AG04449 (cell line): ENCODE measurements at regions of chr1 and their contacts with region 1.

Region 1: GRCh38 chr1:205711104-205712020 is 31.1 kb upstream of the SLC45A3 start:
- DNase-seq: peak; percentile 31
- H3K4me3 ChIP-seq: no peak overlapping the region
- CTCF ChIP-seq: peak; percentile 77

Region 2: GRCh38 chr1:205668951-205669340 is 42.4 kb before region 1 on chr1:
- CTCF ChIA-PET with region 1: interaction called, 461 read pairs
- POLR2A ChIA-PET with region 1: no interaction called
- DNase-seq: no peak
- H3K4me3 ChIP-seq: no peak overlapping the region
- CTCF ChIP-seq: no peak

Region 3: GRCh38 chr1:205689479-205689878 is 21.9 kb before region 1 on chr1:
- CTCF ChIA-PET with region 1: interaction called, 141 read pairs
- POLR2A ChIA-PET with region 1: no interaction called
- DNase-seq: no peak
- H3K4me3 ChIP-seq: no peak overlapping the region
- CTCF ChIP-seq: no peak

Region 4: DNA sequence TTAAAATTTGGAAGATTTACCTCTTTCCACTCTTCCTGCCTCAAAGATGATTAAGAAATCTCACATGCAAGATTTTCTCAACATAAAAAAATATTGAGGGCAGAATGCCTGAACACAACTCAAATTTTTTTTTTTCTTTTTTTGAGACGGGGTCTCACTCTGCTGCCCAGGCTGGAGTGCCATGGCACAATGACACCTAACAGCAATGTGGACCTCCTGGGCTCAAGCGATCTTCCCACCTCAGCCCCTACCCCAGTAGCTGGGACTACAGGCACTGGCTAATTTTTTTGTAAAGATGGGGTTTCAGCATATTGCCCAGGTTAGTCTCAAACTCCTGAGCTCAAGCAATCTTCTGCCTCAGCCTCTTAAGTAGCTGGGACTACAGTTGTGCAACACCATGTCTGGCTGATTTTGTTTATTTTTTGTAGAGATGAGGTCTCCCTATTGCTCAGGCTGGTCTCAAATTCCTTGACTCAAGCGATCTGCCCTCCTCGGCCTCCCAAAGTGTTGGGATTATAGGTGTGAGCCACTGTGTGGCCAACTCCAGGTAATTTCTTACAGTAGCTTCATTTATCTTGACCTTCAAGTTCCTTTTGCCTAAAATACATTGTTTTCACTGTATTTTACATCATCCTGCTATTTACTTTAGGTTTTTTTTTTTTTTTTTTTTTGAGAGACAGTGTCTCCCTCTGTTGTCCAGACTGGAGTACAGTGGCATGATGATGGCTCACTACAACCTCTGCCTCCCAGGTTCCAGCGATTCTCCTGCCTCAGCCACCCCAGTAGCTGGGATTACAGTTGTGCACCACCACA is 28.2 kb after region 1 on chr1:
- CTCF ChIA-PET with region 1: interaction called, 362 read pairs
- POLR2A ChIA-PET with region 1: no interaction called
- DNase-seq: peak; percentile 62
- H3K4me3 ChIP-seq: no peak overlapping the region
- CTCF ChIP-seq: peak; percentile 14

Region 5: DNA sequence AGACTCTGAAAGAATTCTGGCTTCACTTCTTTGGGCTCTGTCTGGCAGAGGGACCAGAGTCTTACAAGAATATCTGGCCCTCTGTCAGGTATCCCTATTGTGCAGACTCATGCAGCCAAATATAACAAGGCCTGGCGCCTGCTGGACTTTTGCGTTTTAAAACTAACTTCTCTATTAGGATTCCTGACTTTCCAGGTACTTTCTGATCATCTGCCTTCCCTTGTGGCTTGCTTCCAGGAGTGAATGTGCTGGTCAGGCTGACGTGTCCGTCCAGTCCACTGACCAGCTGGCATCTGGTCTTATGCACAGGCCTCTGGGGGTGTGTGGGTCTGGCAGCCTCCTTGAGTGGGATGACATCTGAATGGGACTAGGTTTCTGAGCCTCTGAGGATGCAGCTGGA is 72.5 kb after region 1 on chr1:
- CTCF ChIA-PET with region 1: interaction called, 12 read pairs
- POLR2A ChIA-PET with region 1: no interaction called
- DNase-seq: no peak
- H3K4me3 ChIP-seq: no peak overlapping the region
- CTCF ChIP-seq: no peak

Region 6: GRCh38 chr1:206658264-206658980 is 947.1 kb after region 1 on chr1:
- CTCF ChIA-PET with region 1: no interaction called
- POLR2A ChIA-PET with region 1: no interaction called
- DNase-seq: no peak
- H3K4me3 ChIP-seq: no peak overlapping the region
- CTCF ChIP-seq: peak; percentile 80